ENCODE measurements at regions of chr22 and their contacts with region 1.

Region 1: GRCh38 chr22:28855355-28856094 is 27.8 kb upstream of the ZNRF3 start:
- DNase-seq: peak in 1 of 2 donors; percentile 30
- H3K4me3 ChIP-seq: no peak overlapping the region
- H3K27ac ChIP-seq: no peak overlapping the region
- H3K4me1 ChIP-seq: peaks cover 0 to 3% (median 1%) of the 10 kb centered on the region in 4 donors
- H3K27me3 ChIP-seq: no peaks in the 10 kb centered on the region
- CTCF ChIP-seq: peak; percentile 90 to 97

Region 2: DNA sequence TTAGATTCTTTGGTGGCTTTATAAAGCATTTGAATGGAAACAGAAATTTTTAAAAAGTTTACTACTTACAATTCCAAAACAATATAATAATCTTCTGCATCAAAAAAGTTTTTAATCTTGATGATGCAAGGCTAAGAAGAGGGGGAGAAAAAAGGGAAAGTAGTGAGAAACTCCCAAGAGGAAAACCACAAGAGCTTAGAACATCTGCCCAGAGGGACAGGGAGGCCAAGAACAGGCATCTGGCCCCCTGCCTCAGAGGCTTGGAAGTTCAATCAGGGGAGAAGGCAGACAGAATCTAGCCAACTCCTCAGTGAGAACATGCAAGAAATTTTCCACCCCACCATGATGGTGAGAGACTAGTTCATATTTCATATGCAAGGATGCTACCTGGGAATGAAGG is 152.1 kb before region 1 on chr22:
- intact Hi-C with region 1: no loop called
- DNase-seq: no peak
- H3K4me3 ChIP-seq: no peak overlapping the region
- H3K27ac ChIP-seq: no peak overlapping the region
- H3K4me1 ChIP-seq: no peaks in the 10 kb centered on the region
- H3K27me3 ChIP-seq: no peaks in the 10 kb centered on the region
- CTCF ChIP-seq: no peak

Region 3: GRCh38 chr22:29040385-29041275 is 185.1 kb after region 1 on chr22:
- intact Hi-C with region 1: loop called (anchors 2 kb)
- DNase-seq: peak in 1 of 2 donors; percentile 70
- H3K4me3 ChIP-seq: no peak overlapping the region
- H3K27ac ChIP-seq: no peak overlapping the region
- H3K4me1 ChIP-seq: peaks cover 0 to 28% (median 16%) of the 10 kb centered on the region in 4 donors
- H3K27me3 ChIP-seq: no peaks in the 10 kb centered on the region
- CTCF ChIP-seq: peak; percentile 96 to 97

Measured in tibial artery (tissue), 4 donors.